Heart left ventricle (tissue), 16 donors: ENCODE measurements at regions of chr21 and their contacts with region 1.

Region 1: DNA sequence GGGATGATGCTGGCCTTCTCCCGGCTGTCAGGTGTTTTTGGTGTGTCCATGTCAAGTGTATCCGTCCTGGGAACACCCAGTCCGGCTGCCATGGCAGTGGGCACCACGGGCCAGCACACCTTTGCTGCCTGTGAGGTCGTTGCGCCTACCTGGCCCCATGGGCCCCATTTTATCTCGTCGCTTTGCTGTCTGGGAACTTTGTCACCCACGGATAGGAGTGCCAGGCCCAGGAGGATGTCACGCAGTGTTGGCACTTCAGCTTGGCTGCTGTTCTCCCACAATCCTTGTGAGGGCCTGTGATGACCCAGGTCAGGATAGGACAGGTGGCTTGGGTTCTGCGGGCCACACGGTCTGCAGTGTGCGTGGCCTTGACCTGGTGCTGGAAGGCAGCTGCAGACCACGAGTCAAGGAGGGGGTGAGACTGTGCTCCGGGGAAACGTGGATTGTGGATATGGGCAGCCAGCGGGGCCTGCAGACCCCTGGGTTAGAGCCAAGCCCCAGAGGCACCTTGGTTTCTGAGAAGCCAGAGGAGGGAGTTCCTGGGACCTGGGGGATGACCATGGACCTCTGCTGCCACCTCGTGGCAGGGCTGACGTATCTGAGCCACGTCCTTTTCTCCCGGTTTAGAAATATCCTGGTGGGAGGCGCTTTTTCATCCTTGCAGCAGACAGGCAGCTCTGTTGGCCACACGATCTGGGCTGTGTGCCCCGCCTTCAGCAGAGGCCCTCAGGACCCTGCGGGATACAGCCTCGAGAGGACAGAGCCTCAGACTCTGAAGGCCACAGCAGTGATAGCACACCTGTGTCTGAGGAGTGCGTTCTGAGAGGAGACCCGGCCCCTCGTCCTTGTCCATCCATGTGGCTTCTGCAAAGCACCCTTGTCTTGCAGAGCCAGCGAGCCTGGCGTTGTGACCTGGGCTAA is 161.1 kb upstream of the COL6A1 start:
- DNase-seq: peak; percentile 67 to 85 (median 69)
- ATAC-seq: peak; percentile 77 to 90 (median 86)
- H3K4me3 ChIP-seq: no peak overlapping the region
- H3K27ac ChIP-seq: no peak overlapping the region
- H3K4me1 ChIP-seq: peaks cover 0 to 5% (median 0%) of the 10 kb centered on the region in 12 donors
- H3K27me3 ChIP-seq: no peaks in the 10 kb centered on the region
- CTCF ChIP-seq: peak; percentile 69 to 84 (median 78)
- POLR2A ChIP-seq: no peak

Region 2: GRCh38 chr21:45923146-45923545 is 102.7 kb after region 1 on chr21:
- intact Hi-C with region 1: loop called in 1 of 10 experiments (anchors 5 kb)
- DNase-seq: peak; percentile 66 to 83 (median 78)
- ATAC-seq: peak; percentile 87 to 94 (median 92)
- H3K4me3 ChIP-seq: no peak overlapping the region
- H3K27ac ChIP-seq: no peak overlapping the region
- H3K4me1 ChIP-seq: peaks cover 0 to 7% (median 0%) of the 10 kb centered on the region in 12 donors
- H3K27me3 ChIP-seq: no peaks in the 10 kb centered on the region
- CTCF ChIP-seq: peak; percentile 74 to 93 (median 88)
- POLR2A ChIP-seq: no peak